Activated CD4-positive, alpha-beta memory T cell treated with anti-CD3 and anti-CD28 coated beads, Interleukin-2, amount 10 ng/mL, durations not matched to agents 7 days and 5 days (primary cell): ENCODE measurements at regions of chr1 and their contacts with region 1.

Region 1: DNA sequence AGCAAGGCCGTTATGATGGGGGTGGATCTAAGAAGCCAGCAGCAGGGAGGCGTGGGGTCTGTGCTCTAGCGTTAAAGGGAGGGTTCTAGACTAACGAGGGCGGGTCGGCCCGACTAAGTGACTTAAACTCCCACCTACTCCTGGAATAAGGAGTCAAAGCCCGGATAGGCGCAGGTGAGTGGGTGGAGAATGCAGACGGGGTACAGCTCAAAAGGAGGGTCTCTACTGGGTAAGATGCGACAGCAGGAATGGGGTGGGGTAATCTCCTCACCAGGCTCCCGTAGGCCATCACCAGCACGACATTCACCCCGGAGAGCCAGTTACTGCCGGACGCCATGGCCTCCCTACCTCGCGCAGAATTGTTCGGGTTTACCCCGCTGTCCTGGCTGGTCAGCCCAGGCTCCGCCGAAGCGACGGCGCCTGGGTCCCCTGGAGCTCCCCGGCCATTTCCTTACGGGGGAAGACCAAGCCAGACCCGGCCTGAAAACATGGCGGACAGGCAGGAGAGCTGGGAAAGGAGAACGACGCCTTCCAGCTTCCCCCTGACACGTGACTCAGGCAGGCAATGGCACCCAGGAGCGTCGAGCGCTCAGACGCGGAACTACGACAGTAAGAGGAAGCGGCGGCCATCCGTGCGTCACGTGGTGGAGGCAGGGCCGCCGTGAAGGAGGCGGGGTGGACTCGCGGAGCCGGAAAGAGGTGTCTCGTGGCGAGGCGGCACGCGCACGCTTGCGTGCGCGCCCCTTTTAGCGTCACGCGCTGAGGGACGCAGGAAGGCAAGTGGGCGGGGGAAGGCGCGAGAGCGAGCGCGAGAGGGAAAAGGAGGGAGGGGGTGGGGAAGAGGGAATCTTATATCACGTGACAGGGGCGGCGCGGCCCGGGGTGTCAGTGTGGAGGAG is at the start of gene UBAP2L:
- DNase-seq: peak; percentile 99
- H3K4me3 Mint-ChIP-seq: peak within 1 kb of the TSS; percentile 92
- H3K27ac Mint-ChIP-seq: peak within 1 kb of the TSS; percentile 97
- H3K4me1 Mint-ChIP-seq: peaks cover 71% of the 10 kb centered on the region
- H3K27me3 Mint-ChIP-seq: no peaks in the 10 kb centered on the region
- total RNA-seq, gene UBAP2L: 155 to 157 TPM

Region 2: DNA sequence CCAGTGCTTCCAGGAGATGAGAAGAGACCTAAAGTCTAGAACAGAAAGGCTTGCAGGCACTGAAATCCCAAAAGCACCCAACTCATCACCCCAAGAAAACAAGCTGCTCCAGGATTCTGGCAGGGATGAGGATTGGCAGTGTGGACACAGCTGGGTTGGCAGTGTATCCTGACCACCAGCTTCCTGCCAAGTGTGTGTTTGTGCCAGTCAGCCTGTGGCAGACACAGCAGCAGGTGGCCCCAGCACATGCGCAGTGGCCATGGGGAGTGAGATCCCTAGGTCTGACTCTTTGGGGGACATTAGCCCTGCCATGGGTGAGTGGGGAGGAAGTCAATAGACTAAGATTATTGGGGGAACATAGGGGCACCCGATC is 570.5 kb before region 1 on chr1:
- CTCF ChIA-PET with region 1: no interaction called
- POLR2A ChIA-PET with region 1: no interaction called
- DNase-seq: no peak
- H3K4me3 Mint-ChIP-seq: no peak overlapping the region
- H3K27ac Mint-ChIP-seq: no peak overlapping the region
- H3K4me1 Mint-ChIP-seq: peaks cover 20% of the 10 kb centered on the region
- H3K27me3 Mint-ChIP-seq: no peaks in the 10 kb centered on the region

Region 3: DNA sequence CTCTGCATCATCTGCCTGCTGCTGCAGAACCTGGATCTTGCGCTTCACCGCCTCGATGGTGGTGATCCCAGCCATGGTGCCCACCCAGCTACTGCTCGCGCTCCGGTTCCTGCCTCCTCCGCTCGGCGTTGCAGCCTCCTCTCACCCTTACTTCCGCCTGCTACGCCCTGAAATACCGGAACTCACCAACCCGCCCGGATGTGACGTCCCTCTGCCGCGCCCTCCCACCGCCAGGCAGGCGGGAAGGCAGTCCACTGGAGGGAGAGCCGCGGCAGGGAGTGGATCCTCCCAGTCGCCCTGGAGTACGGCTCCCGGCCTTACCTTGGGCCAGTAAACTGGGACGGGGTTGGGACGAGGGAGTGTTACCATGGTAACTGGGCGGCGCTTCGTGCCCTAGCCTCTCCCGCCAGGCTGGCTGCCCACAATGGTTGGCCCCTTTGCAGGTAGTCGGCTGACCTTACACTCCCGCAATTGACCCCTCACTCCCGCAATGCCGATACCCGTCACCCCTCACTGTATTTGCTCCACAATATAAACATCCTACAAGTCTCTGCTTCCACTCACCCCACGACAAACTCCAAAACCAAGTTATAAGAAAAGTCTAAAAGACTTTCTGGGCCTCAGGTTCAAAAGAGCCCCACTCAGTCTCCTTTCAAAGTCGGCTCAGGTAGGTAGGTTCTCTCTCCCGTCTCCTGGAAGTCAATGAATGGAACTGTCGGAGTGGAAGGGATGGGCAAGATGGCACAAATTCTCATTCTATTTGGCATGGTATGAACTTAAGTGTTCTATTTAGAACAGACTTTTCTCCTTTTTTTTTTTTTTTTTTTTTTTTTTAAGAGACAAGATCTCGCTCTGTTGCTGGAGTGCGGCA is 37.0 kb before region 1 on chr1:
- CTCF ChIA-PET with region 1: no interaction called
- POLR2A ChIA-PET with region 1: interaction called, 72 read pairs
- DNase-seq: peak; percentile 96
- H3K4me3 Mint-ChIP-seq: peak overlapping the region; percentile 99
- H3K27ac Mint-ChIP-seq: peak overlapping the region; percentile 99
- H3K4me1 Mint-ChIP-seq: peaks cover 45% of the 10 kb centered on the region
- H3K27me3 Mint-ChIP-seq: no peaks in the 10 kb centered on the region

Region 4: DNA sequence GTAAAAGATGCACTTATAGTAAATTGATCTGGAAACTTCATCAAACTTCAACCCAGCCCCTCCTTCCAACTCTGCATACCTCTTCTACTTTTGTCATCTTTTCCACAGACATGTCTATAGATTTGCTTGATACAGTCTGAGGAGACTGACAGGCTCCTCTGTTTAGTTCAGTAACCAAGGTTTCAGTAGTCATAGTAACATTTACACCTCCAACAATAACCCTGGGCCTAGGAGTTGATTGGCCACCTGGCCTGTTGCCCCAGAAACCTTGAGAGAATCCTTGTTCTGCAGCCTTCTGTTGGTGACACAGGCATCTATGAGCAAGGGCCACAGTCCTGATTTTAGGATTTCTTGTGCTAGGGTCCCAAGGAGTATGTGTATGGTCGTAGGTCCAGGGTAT is 14.1 kb before region 1 on chr1 and contains the start of gene CFAP141:
- CTCF ChIA-PET with region 1: interaction called, 5 read pairs
- POLR2A ChIA-PET with region 1: interaction called, 13 read pairs
- DNase-seq: no peak
- H3K4me3 Mint-ChIP-seq: no peak within 1 kb of the TSS
- H3K27ac Mint-ChIP-seq: no peak within 1 kb of the TSS
- H3K4me1 Mint-ChIP-seq: peaks cover 17% of the 10 kb centered on the region
- H3K27me3 Mint-ChIP-seq: no peaks in the 10 kb centered on the region
- total RNA-seq, gene CFAP141: not detected

Region 5: DNA sequence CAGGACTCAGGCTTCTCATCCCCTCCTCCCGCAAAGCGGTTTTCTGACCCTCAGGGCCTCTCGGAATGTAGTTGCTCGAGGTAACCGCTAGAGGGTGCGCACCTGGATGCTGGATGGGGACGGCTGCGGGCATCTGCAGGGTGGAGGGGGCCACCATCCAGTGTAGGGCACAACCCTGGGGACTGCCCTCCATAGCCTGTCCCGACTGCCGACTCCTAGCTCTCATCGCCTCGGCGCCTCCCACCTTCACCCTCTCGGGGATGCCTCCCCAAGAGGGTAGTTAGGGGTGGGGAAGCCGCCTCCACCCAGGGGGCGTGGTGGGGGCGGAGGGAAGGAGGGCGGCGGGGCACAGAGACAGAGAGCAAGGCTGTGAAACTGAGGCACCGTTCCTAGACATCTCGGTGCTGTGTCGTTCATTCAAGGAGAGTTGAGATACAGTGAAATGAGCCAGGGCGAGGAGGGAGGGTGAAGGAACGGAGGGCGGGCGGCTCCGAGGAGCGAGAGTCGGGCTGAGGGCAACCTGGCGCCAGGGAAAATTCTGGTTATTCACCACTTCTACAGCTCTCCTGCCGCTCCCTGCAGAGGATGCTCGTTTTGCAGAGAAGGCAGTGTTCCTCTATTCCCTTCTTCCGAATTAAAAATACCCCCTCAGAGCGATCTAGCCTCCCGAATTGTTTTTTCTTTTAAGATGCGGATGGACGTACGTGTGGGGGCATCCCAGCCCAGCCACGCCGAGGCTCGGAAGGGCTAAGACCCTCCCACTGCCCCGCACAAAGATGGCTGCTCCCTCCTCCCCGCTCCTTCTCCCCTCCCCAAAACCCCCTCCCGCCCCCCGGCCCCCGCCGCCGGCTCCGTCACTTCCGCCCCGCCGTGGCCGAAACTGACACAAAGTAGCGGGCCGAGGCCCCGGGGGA is 104.6 kb after region 1 on chr1 and contains the start of gene ATP8B2:
- CTCF ChIA-PET with region 1: no interaction called
- POLR2A ChIA-PET with region 1: interaction called, 10 read pairs
- DNase-seq: peak; percentile 85
- H3K4me3 Mint-ChIP-seq: peak within 1 kb of the TSS; percentile 86
- H3K27ac Mint-ChIP-seq: peak within 1 kb of the TSS; percentile 89
- H3K4me1 Mint-ChIP-seq: peaks cover 42% of the 10 kb centered on the region
- H3K27me3 Mint-ChIP-seq: peaks cover 17% of the 10 kb centered on the region
- total RNA-seq, gene ATP8B2: 142 to 149 TPM